ENCODE measurements at regions of chrX and their contacts with region 1.

Region 1: DNA sequence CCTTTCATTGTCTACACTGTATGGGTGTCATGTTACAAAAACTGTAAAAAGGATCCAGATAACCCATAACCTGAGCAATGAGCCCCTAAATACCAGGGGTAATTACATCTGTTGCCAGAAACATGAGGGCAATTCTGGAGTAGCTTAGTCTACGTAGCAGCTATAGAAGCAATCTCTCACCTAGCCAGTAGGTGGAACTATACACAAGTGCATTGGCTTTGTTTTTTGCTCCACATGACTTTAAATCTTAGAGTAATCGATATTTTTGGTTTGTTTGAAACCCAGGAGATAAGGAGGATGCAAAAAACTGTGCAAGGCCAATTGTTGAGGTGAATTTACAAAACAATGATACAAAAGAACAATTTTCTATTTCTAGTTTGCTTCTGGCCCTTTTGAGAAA is 57.5 kb downstream of the GPR82 start:
- DNase-seq: no peak
- ATAC-seq: peak in 1 of 8 donors; percentile 64
- H3K4me3 ChIP-seq: no peak overlapping the region
- H3K27ac ChIP-seq: no peak overlapping the region
- H3K4me1 ChIP-seq: peaks cover 0 to 8% (median 0%) of the 10 kb centered on the region in 9 donors
- H3K27me3 ChIP-seq: peaks cover 0 to 22% (median 0%) of the 10 kb centered on the region in 7 donors
- CTCF ChIP-seq: peak; percentile 10 to 73 (median 59)

Region 2: GRCh38 chrX:40663880-40664633 is 1117.4 kb before region 1 on chrX:
- intact Hi-C with region 1: no loop called
- DNase-seq: no peak
- ATAC-seq: peak in 1 of 8 donors; percentile 41
- H3K4me3 ChIP-seq: no peak overlapping the region
- H3K27ac ChIP-seq: no peak overlapping the region
- H3K4me1 ChIP-seq: no peaks in the 10 kb centered on the region
- H3K27me3 ChIP-seq: peaks cover 0 to 52% (median 0%) of the 10 kb centered on the region in 7 donors
- CTCF ChIP-seq: peak in 6 of 9 donors; percentile 27 to 47 (median 38)

Region 3: DNA sequence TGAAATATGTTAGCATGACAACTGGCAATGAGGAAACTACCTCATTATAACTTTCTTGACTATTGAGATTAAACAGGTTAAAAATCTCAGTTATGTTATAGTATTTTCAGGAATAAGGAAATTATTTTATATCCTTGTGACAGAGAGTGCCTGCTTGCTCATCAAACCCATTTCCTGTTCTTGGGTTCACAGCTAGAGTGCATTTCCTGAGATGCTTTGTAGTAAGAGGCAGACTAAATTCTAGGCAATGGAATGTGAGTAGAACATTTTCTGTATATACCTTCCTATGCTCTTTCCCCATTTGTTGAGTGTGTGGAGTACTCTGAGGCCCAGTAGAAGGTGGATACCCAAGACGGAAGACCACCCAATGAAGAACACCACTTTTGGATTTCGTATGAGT is 238.7 kb after region 1 on chrX:
- intact Hi-C with region 1: no loop called
- DNase-seq: no peak
- ATAC-seq: no peak
- H3K4me3 ChIP-seq: no peak overlapping the region
- H3K27ac ChIP-seq: no peak overlapping the region
- H3K4me1 ChIP-seq: no peaks in the 10 kb centered on the region
- H3K27me3 ChIP-seq: peaks cover 0 to 4% (median 0%) of the 10 kb centered on the region in 7 donors
- CTCF ChIP-seq: no peak

Region 4: DNA sequence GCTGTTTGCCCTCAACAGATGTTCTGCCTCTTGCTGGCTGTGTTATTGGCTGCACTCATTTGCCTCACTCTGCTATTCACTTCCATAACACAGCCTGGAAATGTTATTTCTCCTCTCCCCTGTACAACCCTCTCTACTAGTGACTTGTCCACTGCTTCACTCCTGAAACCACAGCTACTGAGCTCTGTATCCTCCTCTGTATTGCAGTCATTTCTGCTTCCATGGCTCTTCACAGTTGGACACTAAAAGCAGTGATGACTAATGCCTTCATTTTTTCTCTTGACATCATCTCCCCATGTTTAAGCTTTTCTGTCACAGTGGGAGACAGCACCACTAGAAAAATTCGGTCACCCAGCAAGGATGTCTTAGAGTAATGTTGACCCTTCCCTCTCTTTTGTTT is 1119.4 kb after region 1 on chrX:
- intact Hi-C with region 1: loop called in 1 of 10 experiments (anchors 10 kb)
- DNase-seq: no peak
- ATAC-seq: no peak
- H3K4me3 ChIP-seq: no peak overlapping the region
- H3K27ac ChIP-seq: no peak overlapping the region
- H3K4me1 ChIP-seq: no peaks in the 10 kb centered on the region
- H3K27me3 ChIP-seq: peaks cover 0 to 4% (median 0%) of the 10 kb centered on the region in 7 donors
- CTCF ChIP-seq: no peak